ENCODE measurements at regions of chr2 and their contacts with region 1.

Region 1: DNA sequence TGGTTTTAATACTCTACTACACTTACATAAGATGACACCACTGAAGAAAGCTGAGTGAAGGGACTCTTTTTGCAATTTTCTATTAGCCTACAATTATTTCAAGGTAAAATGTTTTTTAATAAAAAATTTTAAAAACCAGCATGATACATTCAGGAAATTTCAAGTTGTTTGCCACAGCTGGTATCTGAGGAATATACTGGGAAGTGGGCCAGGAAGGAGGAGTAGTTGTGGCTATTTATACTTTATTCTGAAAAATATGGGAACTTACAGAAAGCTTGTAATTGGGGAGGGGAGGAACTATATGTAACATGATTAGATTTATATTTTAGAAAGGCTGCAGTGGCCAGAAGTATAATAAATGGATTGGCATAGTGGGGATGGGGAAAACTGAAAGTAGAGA is 40.8 kb downstream of the WDR35 start:
- DNase-seq: peak; percentile 33
- H3K4me3 ChIP-seq: no peak overlapping the region
- H3K27ac ChIP-seq: no peak overlapping the region
- H3K27me3 ChIP-seq: no peaks in the 10 kb centered on the region
- CTCF ChIP-seq: no peak

Region 2: GRCh38 chr2:19911799-19912509 is 37.1 kb before region 1 on chr2:
- CTCF ChIA-PET with region 1: no interaction called
- POLR2A ChIA-PET with region 1: interaction called, 10 read pairs
- DNase-seq: peak; percentile 33
- H3K4me3 ChIP-seq: no peak overlapping the region
- H3K27ac ChIP-seq: no peak overlapping the region
- H3K27me3 ChIP-seq: no peaks in the 10 kb centered on the region
- CTCF ChIP-seq: no peak

Measured in AG04450 (cell line).